ENCODE measurements at regions of chr2 and their contacts with region 1.

Region 1: GRCh38 chr2:210099940-210100339 is 71.3 kb downstream of the KANSL1L start:
- DNase-seq: no peak
- ATAC-seq: no peak
- H3K4me3 ChIP-seq: no peak overlapping the region
- H3K27ac ChIP-seq: no peak overlapping the region
- H3K4me1 ChIP-seq: no peaks in the 10 kb centered on the region
- H3K27me3 ChIP-seq: no peaks in the 10 kb centered on the region
- CTCF ChIP-seq: no peak
- EP300 ChIP-seq: no peak
- POLR2A ChIP-seq: no peak
- RAD21 ChIP-seq: no peak

Region 2: GRCh38 chr2:210063306-210063705 is 36.6 kb before region 1 on chr2:
- CTCF ChIA-PET with region 1: no interaction called
- POLR2A ChIA-PET with region 1: no interaction called
- in situ Hi-C with region 1: no loop called
- intact Hi-C with region 1: loop called (anchors 1 kb)
- DNase-seq: no peak
- ATAC-seq: peak; percentile 63
- H3K4me3 ChIP-seq: no peak overlapping the region
- H3K27ac ChIP-seq: no peak overlapping the region
- H3K4me1 ChIP-seq: 0 out of 2 replicates have a peak, but pooled peaks cover 9% of the 10 kb centered on the region
- H3K27me3 ChIP-seq: no peaks in the 10 kb centered on the region
- CTCF ChIP-seq: no peak
- EP300 ChIP-seq: no peak
- POLR2A ChIP-seq: no peak
- RAD21 ChIP-seq: no peak

Region 3: DNA sequence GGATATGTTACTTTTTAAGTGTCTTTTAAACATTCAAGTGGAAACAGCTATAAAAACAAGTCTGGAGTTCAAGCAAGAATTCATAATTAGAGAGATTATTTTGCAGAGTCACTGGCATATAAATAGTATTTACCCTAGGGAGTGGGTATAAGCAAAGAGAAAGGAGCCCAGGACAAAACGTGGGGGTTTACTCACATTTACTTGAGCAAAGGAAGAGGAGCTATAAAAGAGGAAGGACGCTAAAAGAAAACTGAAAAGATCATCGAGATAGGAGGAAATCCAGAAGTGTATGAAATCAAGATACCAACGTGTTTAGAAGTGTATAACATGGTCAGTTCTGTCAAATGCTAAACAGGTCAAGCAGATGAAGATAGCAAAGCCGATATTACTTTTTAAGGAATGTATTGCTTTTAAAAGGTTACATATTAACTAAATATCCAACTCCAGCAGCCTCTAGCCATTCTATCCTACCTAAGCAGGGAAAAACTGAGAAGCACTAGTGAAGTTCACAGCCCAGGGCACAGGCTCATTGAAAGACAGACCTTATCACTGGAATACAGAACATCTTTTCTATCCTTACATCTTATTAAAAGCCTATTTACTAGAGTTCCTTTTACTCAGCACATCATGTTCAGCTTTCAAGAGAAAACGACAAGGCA is 62.7 kb after region 1 on chr2:
- CTCF ChIA-PET with region 1: no interaction called
- POLR2A ChIA-PET with region 1: no interaction called
- in situ Hi-C with region 1: no loop called
- intact Hi-C with region 1: no loop called
- DNase-seq: no peak
- ATAC-seq: peak; percentile 59; the same call in 2 of the 3 replicates
- H3K4me3 ChIP-seq: no peak overlapping the region
- H3K27ac ChIP-seq: no peak overlapping the region
- H3K4me1 ChIP-seq: peaks cover 10% of the 10 kb centered on the region
- H3K27me3 ChIP-seq: no peaks in the 10 kb centered on the region
- CTCF ChIP-seq: no peak
- EP300 ChIP-seq: no peak
- POLR2A ChIP-seq: no peak
- RAD21 ChIP-seq: no peak

Measured in HepG2 (cell line).